Colonic mucosa (tissue), 4 donors: ENCODE measurements at regions of chrX and their contacts with region 1.

Region 1: GRCh38 chrX:17689971-17690409 is 47.3 kb upstream of the SCML1 start:
- DNase-seq: peak; percentile 71
- H3K4me3 ChIP-seq: no peak overlapping the region
- H3K27ac ChIP-seq: no peak overlapping the region
- H3K4me1 ChIP-seq: no peaks in the 10 kb centered on the region
- H3K27me3 ChIP-seq: no peaks in the 10 kb centered on the region
- CTCF ChIP-seq: peak; percentile 71

Region 2: GRCh38 chrX:16826207-16826606 is 863.8 kb before region 1 on chrX:
- intact Hi-C with region 1: loop called (anchors 10 kb)
- DNase-seq: no peak
- H3K4me3 ChIP-seq: no peak overlapping the region
- H3K27ac ChIP-seq: no peak overlapping the region
- H3K4me1 ChIP-seq: no peaks in the 10 kb centered on the region
- H3K27me3 ChIP-seq: no peaks in the 10 kb centered on the region
- CTCF ChIP-seq: peak; percentile 58

Region 3: GRCh38 chrX:17120816-17121215 is 569.2 kb before region 1 on chrX:
- intact Hi-C with region 1: loop called (anchors 10 kb)
- DNase-seq: no peak
- H3K4me3 ChIP-seq: no peak overlapping the region
- H3K27ac ChIP-seq: no peak overlapping the region
- H3K4me1 ChIP-seq: no peaks in the 10 kb centered on the region
- H3K27me3 ChIP-seq: no peaks in the 10 kb centered on the region
- CTCF ChIP-seq: no peak

Region 4: GRCh38 chrX:17242470-17242869 is 447.5 kb before region 1 on chrX:
- intact Hi-C with region 1: loop called (anchors 5 kb)
- DNase-seq: peak; percentile 53
- H3K4me3 ChIP-seq: no peak overlapping the region
- H3K27ac ChIP-seq: no peak overlapping the region
- H3K4me1 ChIP-seq: no peaks in the 10 kb centered on the region
- H3K27me3 ChIP-seq: no peaks in the 10 kb centered on the region
- CTCF ChIP-seq: peak; percentile 68

Region 5: GRCh38 chrX:17535229-17535628 is 154.8 kb before region 1 on chrX:
- intact Hi-C with region 1: loop called (anchors 10 kb)
- DNase-seq: peak; percentile 43
- H3K4me3 ChIP-seq: no peak overlapping the region
- H3K27ac ChIP-seq: no peak overlapping the region
- H3K4me1 ChIP-seq: no peaks in the 10 kb centered on the region
- H3K27me3 ChIP-seq: no peaks in the 10 kb centered on the region
- CTCF ChIP-seq: peak; percentile 21

Region 6: DNA sequence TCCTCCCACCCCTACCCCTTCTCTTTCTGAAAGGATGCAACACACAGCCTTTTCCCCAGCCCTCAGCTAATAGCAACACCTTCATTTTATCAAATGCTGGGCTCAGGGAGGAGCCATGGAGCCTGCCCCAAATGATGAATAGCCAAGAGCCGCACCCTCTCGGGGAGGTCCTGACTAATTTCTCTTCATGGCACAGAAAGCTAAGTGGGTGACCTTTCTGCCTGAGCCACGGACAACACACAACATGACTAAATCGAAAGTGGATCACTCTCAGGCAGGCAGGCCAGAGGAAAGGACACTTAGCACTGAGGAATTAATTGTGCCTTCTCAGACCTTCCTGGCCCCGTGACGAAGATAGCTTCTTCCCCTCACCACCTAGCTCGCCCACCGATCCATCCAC is 336.2 kb after region 1 on chrX:
- intact Hi-C with region 1: no loop called
- DNase-seq: no peak
- H3K4me3 ChIP-seq: no peak overlapping the region
- H3K27ac ChIP-seq: no peak overlapping the region
- H3K4me1 ChIP-seq: no peaks in the 10 kb centered on the region
- H3K27me3 ChIP-seq: no peaks in the 10 kb centered on the region
- CTCF ChIP-seq: no peak